ENCODE measurements at regions of chr18 and their contacts with region 1.

Region 1: DNA sequence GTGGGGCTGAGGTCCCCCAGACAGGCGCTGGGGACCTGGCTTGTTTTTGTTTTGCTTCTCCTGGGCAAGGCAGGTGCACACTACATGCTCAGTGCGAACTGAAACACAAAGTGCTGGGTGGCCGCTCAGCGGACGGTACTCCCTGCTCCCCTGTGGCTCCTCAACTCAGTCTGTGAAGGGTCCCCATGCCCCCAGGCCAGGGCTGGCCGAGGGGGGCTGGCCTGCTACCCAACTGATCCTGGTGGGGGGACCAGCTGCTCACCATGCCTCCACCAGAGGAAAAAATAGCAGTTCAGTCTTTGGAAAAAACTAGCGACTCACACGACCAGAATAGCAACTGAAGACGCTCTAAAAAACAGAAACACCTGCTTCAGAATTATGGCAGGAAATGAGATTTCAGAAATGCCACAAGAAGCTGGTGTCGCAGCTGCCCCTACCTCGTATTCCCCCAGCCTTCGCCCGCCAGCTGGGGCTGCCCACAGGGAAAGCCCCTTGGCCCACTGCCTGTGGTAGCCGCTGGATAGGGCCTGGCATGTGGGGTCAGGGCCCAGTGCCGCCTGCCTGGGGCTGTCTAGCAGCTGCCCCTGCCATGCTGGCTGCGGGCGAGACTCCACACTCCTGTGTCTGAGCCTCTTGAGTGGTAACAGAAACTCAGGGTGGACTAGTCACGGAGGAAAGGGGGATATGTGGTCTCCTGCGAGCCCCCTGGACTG is 43.7 kb downstream of the MEX3C start:
- DNase-seq: peak; percentile 66
- ATAC-seq: peak; percentile 76
- H3K4me3 Mint-ChIP-seq: peak overlapping the region; percentile 86
- H3K27ac Mint-ChIP-seq: peak overlapping the region; percentile 99
- H3K4me1 Mint-ChIP-seq: peaks cover 54% of the 10 kb centered on the region
- H3K27me3 Mint-ChIP-seq: no peaks in the 10 kb centered on the region
- CTCF ChIP-seq: no peak

Region 2: GRCh38 chr18:50830544-50830943 is 323.3 kb before region 1 on chr18:
- CTCF ChIA-PET with region 1: no interaction called
- POLR2A ChIA-PET with region 1: no interaction called
- intact Hi-C with region 1: loop called (anchors 5 kb)
- DNase-seq: no peak
- ATAC-seq: peak; percentile 84
- H3K4me3 Mint-ChIP-seq: peak overlapping the region; percentile 11
- H3K27ac Mint-ChIP-seq: peak overlapping the region; percentile 71
- H3K4me1 Mint-ChIP-seq: peaks cover 27% of the 10 kb centered on the region
- H3K27me3 Mint-ChIP-seq: no peaks in the 10 kb centered on the region
- CTCF ChIP-seq: no peak

Region 3: GRCh38 chr18:50986360-50987087 is 167.3 kb before region 1 on chr18:
- CTCF ChIA-PET with region 1: no interaction called
- POLR2A ChIA-PET with region 1: no interaction called
- intact Hi-C with region 1: no loop called
- DNase-seq: no peak
- ATAC-seq: no peak
- H3K4me3 Mint-ChIP-seq: no peak overlapping the region
- H3K27ac Mint-ChIP-seq: no peak overlapping the region
- H3K4me1 Mint-ChIP-seq: no peaks in the 10 kb centered on the region
- H3K27me3 Mint-ChIP-seq: no peaks in the 10 kb centered on the region
- CTCF ChIP-seq: no peak

Region 4: DNA sequence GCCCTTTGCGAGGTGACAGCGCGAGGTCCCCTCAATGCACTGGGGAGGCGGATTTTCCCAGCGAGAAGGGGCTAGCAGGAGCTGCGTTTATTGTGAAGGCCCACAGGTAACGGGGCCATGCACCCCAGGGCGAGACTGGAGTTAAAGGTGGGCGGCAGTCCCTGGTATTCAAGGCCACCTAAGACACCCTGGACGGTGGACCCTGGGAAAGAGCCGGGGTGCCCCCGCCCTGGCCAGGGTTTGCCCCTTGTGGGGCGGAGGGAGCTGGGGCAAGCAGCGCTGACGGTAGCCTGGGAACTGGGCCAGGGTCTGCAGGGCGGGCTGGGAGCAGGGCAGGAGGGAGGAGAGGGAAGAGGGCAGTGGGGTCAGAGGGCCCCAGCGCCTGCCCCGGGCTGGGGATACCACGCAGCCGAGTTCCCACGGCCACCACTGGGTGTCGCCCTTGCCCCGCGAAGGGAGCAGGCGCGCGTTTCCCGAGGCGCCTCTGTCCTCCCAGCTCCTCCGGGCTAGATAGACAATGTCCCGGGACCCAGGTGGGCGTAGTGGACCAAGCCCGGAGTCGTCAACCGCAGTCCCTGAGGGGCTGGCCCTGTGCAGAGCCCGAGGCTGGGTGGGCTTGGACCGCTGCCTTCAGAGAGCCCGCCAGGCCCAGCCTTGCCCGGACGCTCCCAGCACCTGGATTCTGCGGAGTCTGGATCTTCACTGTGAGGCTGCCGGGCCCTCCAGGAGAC is 43.6 kb before region 1 on chr18:
- CTCF ChIA-PET with region 1: no interaction called
- POLR2A ChIA-PET with region 1: interaction called, 4 read pairs
- intact Hi-C with region 1: loop called (anchors 2 kb)
- DNase-seq: peak; percentile 67
- ATAC-seq: peak; percentile 77
- H3K4me3 Mint-ChIP-seq: no peak overlapping the region
- H3K27ac Mint-ChIP-seq: no peak overlapping the region
- H3K4me1 Mint-ChIP-seq: peaks cover 13% of the 10 kb centered on the region
- H3K27me3 Mint-ChIP-seq: no peaks in the 10 kb centered on the region
- CTCF ChIP-seq: peak; percentile 82

Region 5: GRCh38 chr18:51164761-51165281 is 11.0 kb after region 1 on chr18:
- CTCF ChIA-PET with region 1: interaction called, 4 read pairs
- POLR2A ChIA-PET with region 1: interaction called, 7 read pairs
- intact Hi-C with region 1: loop called (anchors 1 kb)
- DNase-seq: no peak
- ATAC-seq: no peak
- H3K4me3 Mint-ChIP-seq: no peak overlapping the region
- H3K27ac Mint-ChIP-seq: no peak overlapping the region
- H3K4me1 Mint-ChIP-seq: peaks cover 17% of the 10 kb centered on the region
- H3K27me3 Mint-ChIP-seq: no peaks in the 10 kb centered on the region
- CTCF ChIP-seq: no peak

Region 6: DNA sequence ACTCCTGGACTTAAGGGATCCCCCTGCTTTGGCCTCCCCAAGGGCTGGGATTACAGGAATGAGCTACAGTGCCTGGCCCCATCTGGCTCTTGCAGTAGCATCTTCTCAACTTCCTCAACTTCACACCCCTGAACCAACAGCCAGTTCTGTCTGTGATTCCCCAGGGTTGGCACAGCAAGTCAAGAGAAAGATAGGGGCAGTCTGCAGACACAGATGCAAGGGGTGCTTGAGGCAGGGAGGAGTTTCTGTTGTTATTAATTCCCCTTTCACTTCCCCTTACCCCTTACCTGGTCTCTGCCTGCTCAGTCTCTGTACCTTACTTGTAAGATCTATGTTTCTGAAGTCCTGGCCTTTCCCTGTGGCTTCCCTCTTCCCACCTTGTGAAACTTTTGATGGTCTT is 97.8 kb after region 1 on chr18:
- CTCF ChIA-PET with region 1: no interaction called
- POLR2A ChIA-PET with region 1: interaction called, 3 read pairs
- intact Hi-C with region 1: loop called (anchors 1 kb)
- DNase-seq: peak; percentile 38
- ATAC-seq: peak; percentile 99
- H3K4me3 Mint-ChIP-seq: no peak overlapping the region
- H3K27ac Mint-ChIP-seq: peak overlapping the region; percentile 86
- H3K4me1 Mint-ChIP-seq: peaks cover 22% of the 10 kb centered on the region
- H3K27me3 Mint-ChIP-seq: no peaks in the 10 kb centered on the region
- CTCF ChIP-seq: no peak

Measured in activated B cell treated with CpG ODN at 0.5 μM for 24 hours (primary cell).